Sigmoid colon (tissue), 7 donors: ENCODE measurements at regions of chr2 and their contacts with region 1.

Region 1: GRCh38 chr2:121736462-121737341 is at the start of gene NIFK:
- DNase-seq: peak; percentile 99
- H3K4me3 ChIP-seq: peak within 1 kb of the TSS; percentile 77 to 98 (median 91)
- H3K27ac ChIP-seq: peak within 1 kb of the TSS; percentile 82 to 91 (median 86)
- H3K4me1 ChIP-seq: peaks cover 0 to 18% (median 13%) of the 10 kb centered on the region in 4 donors
- H3K27me3 ChIP-seq: no peaks in the 10 kb centered on the region
- CTCF ChIP-seq: no peak
- EP300 ChIP-seq: no peak
- POLR2A ChIP-seq: peak; percentile 21 to 37
- total RNA-seq, gene NIFK: 25.4 to 51.2 (median 32.1) TPM

Region 2: DNA sequence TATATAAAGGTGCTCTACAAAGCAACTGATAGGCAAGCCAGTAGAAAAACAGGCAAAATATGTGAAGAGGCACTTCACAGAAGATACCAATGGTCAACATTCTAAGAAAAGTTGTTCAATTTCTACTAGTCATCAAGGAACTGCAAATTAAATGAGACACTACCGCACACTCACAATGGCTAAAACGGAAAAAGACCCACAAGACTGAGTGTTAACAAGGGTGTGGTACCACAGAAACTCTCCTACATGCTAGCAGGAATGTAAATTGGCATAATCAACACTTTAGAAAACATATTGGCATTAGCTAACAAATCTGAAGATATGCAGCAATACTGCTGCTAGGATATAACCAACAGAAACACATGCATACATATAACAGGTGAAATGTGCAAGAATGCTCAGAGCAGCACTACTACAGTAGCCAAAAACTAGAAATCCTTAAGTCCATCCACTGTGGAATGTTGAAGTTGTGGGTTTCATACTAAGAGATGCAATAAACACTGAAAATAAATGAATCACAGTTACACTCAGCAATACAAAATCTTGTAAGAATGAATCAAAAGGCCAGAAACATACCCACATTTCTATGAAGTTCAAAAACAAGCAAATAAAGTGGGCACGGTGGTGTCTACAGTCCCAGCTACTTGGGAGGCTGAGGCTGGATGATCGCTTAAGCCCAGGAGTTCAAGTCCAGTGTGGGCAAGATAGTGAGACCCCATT is 196.8 kb before region 1 on chr2:
- intact Hi-C with region 1: no loop called
- DNase-seq: no peak
- H3K4me3 ChIP-seq: no peak overlapping the region
- H3K27ac ChIP-seq: no peak overlapping the region
- H3K4me1 ChIP-seq: peaks cover 0 to 65% (median 42%) of the 10 kb centered on the region in 4 donors
- H3K27me3 ChIP-seq: no peaks in the 10 kb centered on the region
- CTCF ChIP-seq: no peak
- EP300 ChIP-seq: no peak
- POLR2A ChIP-seq: no peak

Region 3: DNA sequence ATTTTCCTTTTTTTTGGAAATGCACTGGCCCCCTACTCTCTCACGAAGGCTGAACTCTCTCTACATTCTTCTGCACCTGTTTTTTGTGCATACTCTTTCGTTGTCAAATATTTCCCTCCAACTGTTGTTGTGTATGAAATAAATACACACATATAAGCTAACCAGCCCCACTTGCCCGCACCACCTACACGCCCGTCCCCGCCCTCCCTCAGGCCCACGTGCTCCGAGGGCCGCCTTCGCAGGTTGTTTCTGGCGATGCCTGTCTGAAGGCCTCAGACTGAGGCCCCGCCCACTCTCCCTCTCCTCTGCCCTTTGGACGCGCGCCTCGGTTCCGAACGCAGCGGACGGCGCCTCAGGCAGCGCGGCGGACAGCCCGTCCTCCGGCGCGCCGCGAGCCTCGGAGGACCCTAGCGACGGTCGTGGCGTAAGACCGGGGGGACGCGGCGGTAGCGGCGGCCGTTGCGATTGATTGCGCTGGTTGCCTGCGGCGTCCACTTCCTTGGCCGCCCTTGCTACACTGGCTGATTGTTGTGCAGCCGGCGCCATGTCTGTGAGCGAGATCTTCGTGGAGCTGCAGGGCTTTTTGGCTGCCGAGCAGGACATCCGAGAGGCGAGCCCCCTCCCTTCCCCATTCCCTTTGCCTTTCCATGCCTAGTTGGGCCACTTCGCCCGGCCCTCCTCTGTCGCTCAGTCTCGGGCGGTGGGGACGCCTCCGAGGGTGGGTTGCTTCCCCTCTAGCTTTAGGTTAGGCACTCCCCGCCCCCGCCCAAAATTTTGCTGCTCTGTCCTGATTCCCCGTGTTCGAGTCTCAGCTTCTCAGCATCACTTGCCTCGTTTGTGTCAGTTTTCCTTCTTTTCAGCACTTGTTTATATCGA is 18.8 kb after region 1 on chr2 and contains the start of gene TSN:
- intact Hi-C with region 1: loop called (anchors 1 kb)
- DNase-seq: peak; percentile 98
- H3K4me3 ChIP-seq: peak within 1 kb of the TSS; percentile 72 to 95 (median 86)
- H3K27ac ChIP-seq: peak within 1 kb of the TSS; percentile 71 to 89 (median 82)
- H3K4me1 ChIP-seq: peaks cover 0 to 34% (median 28%) of the 10 kb centered on the region in 4 donors
- H3K27me3 ChIP-seq: no peaks in the 10 kb centered on the region
- CTCF ChIP-seq: no peak
- EP300 ChIP-seq: no peak
- POLR2A ChIP-seq: peak in 1 of 2 donors; percentile 42
- total RNA-seq, gene TSN: 24.8 to 51.5 (median 42.0) TPM